MCF 10A (cell line): ENCODE measurements at regions of chr2 and their contacts with region 1.

Region 1: GRCh38 chr2:70086838-70087701 is at the start of gene PCBP1:
- DNase-seq: peak; percentile 91
- H3K4me3 Mint-ChIP-seq: peak within 1 kb of the TSS; percentile 94
- H3K27ac Mint-ChIP-seq: peak within 1 kb of the TSS; percentile 100
- H3K4me1 Mint-ChIP-seq: peaks cover 38% of the 10 kb centered on the region
- H3K27me3 Mint-ChIP-seq: no peaks in the 10 kb centered on the region
- CTCF ChIP-seq: no peak
- total RNA-seq, gene PCBP1: 259 and 277 TPM in 2 replicates

Region 2: GRCh38 chr2:70070541-70071268 is 16.4 kb before region 1 on chr2:
- CTCF ChIA-PET with region 1: interaction called, 27 read pairs
- POLR2A ChIA-PET with region 1: interaction called, 71 read pairs
- intact Hi-C with region 1: no loop called
- DNase-seq: peak; percentile 85
- H3K4me3 Mint-ChIP-seq: no peak overlapping the region
- H3K27ac Mint-ChIP-seq: peak overlapping the region; percentile 7
- H3K4me1 Mint-ChIP-seq: peaks cover 8% of the 10 kb centered on the region
- H3K27me3 Mint-ChIP-seq: no peaks in the 10 kb centered on the region
- CTCF ChIP-seq: peak; percentile 50

Region 3: GRCh38 chr2:70104231-70105111 is 17.4 kb after region 1 on chr2:
- CTCF ChIA-PET with region 1: interaction called, 4 read pairs
- POLR2A ChIA-PET with region 1: interaction called, 42 read pairs
- intact Hi-C with region 1: no loop called
- DNase-seq: no peak
- H3K4me3 Mint-ChIP-seq: no peak overlapping the region
- H3K27ac Mint-ChIP-seq: no peak overlapping the region
- H3K4me1 Mint-ChIP-seq: peaks cover 10% of the 10 kb centered on the region
- H3K27me3 Mint-ChIP-seq: no peaks in the 10 kb centered on the region
- CTCF ChIP-seq: no peak

Region 4: GRCh38 chr2:70124983-70125480 is 38.0 kb after region 1 on chr2:
- CTCF ChIA-PET with region 1: interaction called, 4 read pairs
- POLR2A ChIA-PET with region 1: interaction called, 328 read pairs
- intact Hi-C with region 1: no loop called
- DNase-seq: peak; percentile 30
- H3K4me3 Mint-ChIP-seq: peak overlapping the region; percentile 76
- H3K27ac Mint-ChIP-seq: peak overlapping the region; percentile 95
- H3K4me1 Mint-ChIP-seq: peaks cover 21% of the 10 kb centered on the region
- H3K27me3 Mint-ChIP-seq: no peaks in the 10 kb centered on the region
- CTCF ChIP-seq: no peak

Region 5: GRCh38 chr2:70161069-70161534 is 74.0 kb after region 1 on chr2:
- CTCF ChIA-PET with region 1: no interaction called
- POLR2A ChIA-PET with region 1: interaction called, 12 read pairs
- intact Hi-C with region 1: no loop called
- DNase-seq: peak; percentile 49
- H3K4me3 Mint-ChIP-seq: no peak overlapping the region
- H3K27ac Mint-ChIP-seq: no peak overlapping the region
- H3K4me1 Mint-ChIP-seq: no peaks in the 10 kb centered on the region
- H3K27me3 Mint-ChIP-seq: no peaks in the 10 kb centered on the region
- CTCF ChIP-seq: no peak

Region 6: GRCh38 chr2:70190418-70191243 is 103.6 kb after region 1 on chr2 and contains the start of gene C2orf42:
- CTCF ChIA-PET with region 1: no interaction called
- POLR2A ChIA-PET with region 1: interaction called, 37 read pairs
- intact Hi-C with region 1: no loop called
- DNase-seq: peak; percentile 97
- H3K4me3 Mint-ChIP-seq: peak within 1 kb of the TSS; percentile 80
- H3K27ac Mint-ChIP-seq: peak within 1 kb of the TSS; percentile 97
- H3K4me1 Mint-ChIP-seq: peaks cover 5% of the 10 kb centered on the region
- H3K27me3 Mint-ChIP-seq: no peaks in the 10 kb centered on the region
- CTCF ChIP-seq: no peak
- total RNA-seq, gene C2orf42: 17.6 and 28.5 TPM in 2 replicates

Region 7: DNA sequence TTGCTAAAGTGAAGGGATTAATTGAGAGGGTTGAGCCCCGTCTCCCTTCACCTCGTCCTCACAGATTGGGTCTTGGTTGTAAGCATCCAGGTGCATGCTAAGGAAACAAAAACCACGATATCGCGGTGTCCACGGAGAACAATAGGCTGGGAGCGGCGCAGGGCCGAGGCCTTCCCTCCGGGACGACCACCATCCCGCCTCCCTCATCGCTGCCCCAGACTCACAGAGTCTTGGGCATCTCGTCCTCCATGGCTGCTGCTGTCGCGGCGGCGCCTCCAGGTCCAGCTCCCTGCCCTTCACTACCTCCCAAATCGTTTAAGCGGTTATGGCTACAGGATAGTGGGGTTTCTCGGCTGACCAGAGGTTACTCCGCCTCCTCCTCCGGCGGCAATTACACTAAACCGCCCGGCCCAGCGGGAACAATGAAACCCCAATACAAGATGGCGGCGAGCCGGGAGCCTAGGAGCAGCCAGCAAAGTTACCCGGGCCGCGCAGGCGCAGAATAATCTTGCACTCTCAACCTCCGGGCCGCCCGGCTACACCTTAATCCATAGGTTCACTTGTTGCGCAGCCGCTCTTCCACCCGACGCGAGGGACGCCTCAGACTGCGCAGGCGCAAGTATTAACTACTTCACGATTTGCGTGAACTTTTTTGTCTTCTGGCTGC is 161.2 kb after region 1 on chr2 and contains the start of gene TIA1:
- CTCF ChIA-PET with region 1: no interaction called
- POLR2A ChIA-PET with region 1: interaction called, 3 read pairs
- intact Hi-C with region 1: loop called (anchors 5 kb)
- DNase-seq: peak; percentile 99
- H3K4me3 Mint-ChIP-seq: peak within 1 kb of the TSS; percentile 82
- H3K27ac Mint-ChIP-seq: peak within 1 kb of the TSS; percentile 86
- H3K4me1 Mint-ChIP-seq: peaks cover 15% of the 10 kb centered on the region
- H3K27me3 Mint-ChIP-seq: no peaks in the 10 kb centered on the region
- CTCF ChIP-seq: no peak
- total RNA-seq, gene TIA1: 75.7 and 83.9 TPM in 2 replicates